Activated naive CD4-positive, alpha-beta T cell treated with anti-CD3 and anti-CD28 coated beads for 36 hours (primary cell): ENCODE measurements at regions of chr5 and their contacts with region 1.

Region 1: DNA sequence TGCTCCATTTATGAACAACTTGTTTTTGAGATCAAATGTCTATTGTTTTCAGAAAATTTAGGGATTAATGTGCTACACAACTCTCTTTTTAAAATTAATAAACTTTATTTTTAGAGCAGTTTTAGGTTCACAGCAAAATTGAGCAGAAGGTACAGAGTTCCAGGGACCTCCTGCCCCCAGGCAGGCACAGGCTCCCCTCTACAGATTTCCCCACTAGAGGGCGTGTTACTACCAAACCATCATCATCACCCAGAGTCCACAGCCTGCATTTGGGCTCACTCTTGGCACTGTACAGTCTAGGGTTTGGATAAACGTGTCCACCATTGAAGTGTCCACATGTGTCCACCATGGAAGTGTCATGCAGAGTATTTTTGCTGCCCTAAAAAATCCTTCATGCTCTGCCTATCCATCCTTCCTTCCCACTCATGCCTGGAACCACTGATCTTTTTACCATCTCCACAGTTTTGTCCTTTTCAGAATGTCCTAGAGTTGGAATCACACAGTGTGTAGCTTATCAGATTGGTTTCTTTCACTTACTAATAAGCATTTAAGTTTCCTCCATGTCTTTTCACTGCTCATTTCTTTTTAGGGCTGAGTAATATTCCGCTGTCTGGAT is 61.7 kb downstream of the MRPL36 start:
- DNase-seq: peak; percentile 68
- H3K4me3 Mint-ChIP-seq: no peak overlapping the region
- H3K27ac Mint-ChIP-seq: no peak overlapping the region
- H3K4me1 Mint-ChIP-seq: no peaks in the 10 kb centered on the region
- H3K27me3 Mint-ChIP-seq: peaks cover 17% of the 10 kb centered on the region

Region 2: DNA sequence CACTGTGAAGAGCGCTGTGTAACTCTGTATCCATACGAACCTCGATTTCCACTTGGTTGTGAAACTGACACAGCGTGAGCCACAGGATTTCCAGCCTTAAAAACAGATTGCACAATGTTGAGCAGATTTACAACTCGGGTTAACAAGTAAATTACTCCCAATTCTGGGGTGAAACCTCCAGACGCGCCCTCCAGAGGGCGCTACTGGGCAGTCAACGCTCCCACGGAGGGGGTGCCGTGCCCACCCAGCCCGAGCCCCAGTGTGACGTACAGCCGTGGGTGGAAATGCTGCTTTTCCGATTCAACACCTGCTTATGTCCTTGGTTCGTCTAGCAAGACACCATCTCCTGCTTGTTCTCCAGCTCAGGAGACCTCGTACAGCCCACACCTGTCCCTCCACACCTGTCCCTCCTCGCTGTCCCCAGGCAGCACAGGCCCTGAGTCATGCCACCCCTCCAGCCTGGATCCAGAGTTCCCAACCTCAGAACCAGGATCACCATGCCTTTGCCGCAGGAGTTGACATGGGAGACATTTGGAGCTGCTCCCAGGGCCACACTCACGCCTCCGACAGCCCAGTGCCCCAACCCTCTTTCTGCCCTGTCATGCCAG is 258.2 kb before region 1 on chr5:
- CTCF ChIA-PET with region 1: no interaction called
- intact Hi-C with region 1: no loop called
- DNase-seq: peak; percentile 48
- H3K4me3 Mint-ChIP-seq: no peak overlapping the region
- H3K27ac Mint-ChIP-seq: no peak overlapping the region
- H3K4me1 Mint-ChIP-seq: peaks cover 4% of the 10 kb centered on the region
- H3K27me3 Mint-ChIP-seq: no peaks in the 10 kb centered on the region

Region 3: DNA sequence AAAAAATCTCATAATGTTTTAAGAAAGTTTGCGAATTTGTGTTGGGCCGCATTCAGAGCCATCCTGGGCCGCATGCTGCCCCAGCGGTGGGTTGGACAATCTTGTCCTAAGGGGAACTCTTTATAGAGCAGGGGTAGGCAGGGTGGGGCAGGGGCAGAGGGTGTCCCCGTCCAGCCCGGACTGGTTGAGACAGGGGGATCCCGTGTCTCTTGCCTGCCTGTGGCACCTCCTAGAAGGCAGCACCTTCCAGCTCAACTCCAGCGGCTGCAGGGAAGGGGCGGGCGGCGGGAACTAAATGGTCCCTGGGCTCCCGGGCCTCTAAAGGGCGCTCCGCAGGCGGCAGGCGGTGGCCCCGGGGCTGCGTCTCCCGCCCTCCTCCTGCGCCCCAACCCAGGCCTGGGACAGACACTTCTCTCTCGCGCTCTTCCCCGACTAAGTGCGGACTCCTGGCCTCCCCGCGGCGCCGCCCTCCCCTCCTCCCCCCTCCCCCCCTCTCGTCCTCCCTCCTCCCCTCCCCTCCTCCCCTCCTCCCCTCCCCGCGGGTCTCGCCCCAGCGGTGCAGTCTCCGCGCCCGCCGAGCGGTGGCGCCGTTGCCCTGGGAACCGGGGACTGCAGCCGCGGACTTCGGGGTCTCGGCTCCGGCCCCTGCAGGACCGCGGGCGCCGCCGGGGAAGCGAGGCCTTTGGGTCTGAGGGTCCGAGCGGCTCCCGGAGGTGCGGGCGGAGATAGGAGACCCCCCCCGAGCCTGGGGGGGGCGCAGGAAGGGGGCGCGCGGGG is 70.9 kb before region 1 on chr5:
- CTCF ChIA-PET with region 1: interaction called, 5 read pairs
- intact Hi-C with region 1: loop called (anchors 5 kb)
- DNase-seq: peak; percentile 64
- H3K4me3 Mint-ChIP-seq: peak overlapping the region; percentile 33
- H3K27ac Mint-ChIP-seq: no peak overlapping the region
- H3K4me1 Mint-ChIP-seq: peaks cover 18% of the 10 kb centered on the region
- H3K27me3 Mint-ChIP-seq: peaks cover 60% of the 10 kb centered on the region

Region 4: DNA sequence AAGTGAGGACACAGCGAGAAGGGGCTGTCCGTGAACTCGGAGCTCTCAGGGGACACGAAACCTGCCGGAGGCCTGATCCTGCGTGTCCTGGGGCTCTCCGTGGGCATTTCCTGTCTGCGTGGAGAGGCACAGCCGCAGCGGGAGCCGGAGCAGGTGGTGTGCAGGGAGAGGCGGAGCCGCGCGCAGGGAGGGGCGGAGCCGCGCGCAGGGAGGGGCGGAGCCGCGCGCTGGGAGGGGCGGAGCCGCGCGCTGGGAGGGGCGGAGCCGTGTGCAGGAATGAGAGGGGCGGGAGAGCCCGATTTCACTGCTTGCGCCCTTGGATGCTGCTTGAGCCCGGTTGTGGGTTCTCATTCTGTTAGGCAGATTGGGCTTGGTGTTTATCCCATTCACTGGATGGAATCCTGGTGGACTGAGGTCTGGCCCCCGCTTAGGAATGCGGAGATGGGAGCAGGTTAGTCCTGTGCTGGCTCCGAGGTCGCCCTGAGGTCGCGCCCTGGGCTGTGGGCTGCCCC is 90.0 kb after region 1 on chr5:
- CTCF ChIA-PET with region 1: no interaction called
- intact Hi-C with region 1: no loop called
- DNase-seq: peak; percentile 8
- H3K4me3 Mint-ChIP-seq: no peak overlapping the region
- H3K27ac Mint-ChIP-seq: no peak overlapping the region
- H3K4me1 Mint-ChIP-seq: no peaks in the 10 kb centered on the region
- H3K27me3 Mint-ChIP-seq: no peaks in the 10 kb centered on the region

Region 5: GRCh38 chr5:2047341-2047927 is 309.5 kb after region 1 on chr5:
- CTCF ChIA-PET with region 1: no interaction called
- intact Hi-C with region 1: no loop called
- DNase-seq: no peak
- H3K4me3 Mint-ChIP-seq: no peak overlapping the region
- H3K27ac Mint-ChIP-seq: no peak overlapping the region
- H3K4me1 Mint-ChIP-seq: no peaks in the 10 kb centered on the region
- H3K27me3 Mint-ChIP-seq: peaks cover 36% of the 10 kb centered on the region